Activated CD4-positive, alpha-beta T cell treated with anti-CD3 and anti-CD28 coated beads for 36 hours (primary cell): ENCODE measurements at regions of chr1 and their contacts with region 1.

Region 1: GRCh38 chr1:12407050-12407961 is 177.5 kb downstream of the VPS13D start:
- DNase-seq: peak; percentile 23
- ATAC-seq: peak; percentile 78
- H3K4me3 Mint-ChIP-seq: no peak overlapping the region
- H3K27ac Mint-ChIP-seq: no peak overlapping the region
- H3K4me1 Mint-ChIP-seq: peaks cover 35% of the 10 kb centered on the region
- H3K27me3 Mint-ChIP-seq: no peaks in the 10 kb centered on the region

Region 2: GRCh38 chr1:12229835-12230548 is 177.3 kb before region 1 on chr1 and contains the start of gene VPS13D:
- CTCF ChIA-PET with region 1: no interaction called
- POLR2A ChIA-PET with region 1: no interaction called
- intact Hi-C with region 1: no loop called
- DNase-seq: peak; percentile 93
- ATAC-seq: peak; percentile 92
- H3K4me3 Mint-ChIP-seq: peak within 1 kb of the TSS; percentile 83
- H3K27ac Mint-ChIP-seq: peak within 1 kb of the TSS; percentile 47
- H3K4me1 Mint-ChIP-seq: peaks cover 23% of the 10 kb centered on the region
- H3K27me3 Mint-ChIP-seq: no peaks in the 10 kb centered on the region
- total RNA-seq, gene VPS13D: 20.6 to 22.9 TPM

Region 3: DNA sequence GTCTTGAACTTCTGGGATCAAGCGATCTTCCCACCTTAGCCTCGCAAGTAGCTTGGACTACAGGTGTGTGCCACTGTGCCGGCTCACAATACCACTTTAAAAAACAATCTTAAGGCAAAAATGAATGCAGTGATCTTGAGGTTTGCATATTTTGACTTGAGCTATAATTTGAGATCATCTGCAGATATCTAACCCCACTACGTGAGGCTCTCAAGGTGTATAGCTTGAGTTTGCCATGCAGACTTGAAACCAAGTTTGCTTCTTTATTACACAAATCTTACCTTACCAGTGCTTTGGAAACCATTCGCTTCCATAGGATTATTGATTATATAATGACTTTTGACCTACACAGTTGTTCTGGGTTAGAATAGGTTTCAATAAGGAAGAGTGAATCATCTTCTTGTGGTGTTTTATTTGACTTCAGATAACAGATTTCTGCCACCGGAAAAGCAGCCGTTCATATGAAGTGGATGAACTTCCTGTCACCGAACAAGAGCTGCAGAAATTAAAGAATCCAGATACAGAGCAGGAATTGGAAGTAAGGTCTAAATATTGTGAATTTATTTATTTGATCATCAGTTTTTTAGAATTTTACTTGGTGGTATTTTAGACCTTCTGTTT is 22.4 kb before region 1 on chr1:
- CTCF ChIA-PET with region 1: interaction called, 11 read pairs
- POLR2A ChIA-PET with region 1: no interaction called
- intact Hi-C with region 1: no loop called
- DNase-seq: peak; percentile 35
- ATAC-seq: peak; percentile 75
- H3K4me3 Mint-ChIP-seq: no peak overlapping the region
- H3K27ac Mint-ChIP-seq: no peak overlapping the region
- H3K4me1 Mint-ChIP-seq: peaks cover 42% of the 10 kb centered on the region
- H3K27me3 Mint-ChIP-seq: no peaks in the 10 kb centered on the region

Region 4: GRCh38 chr1:12630946-12631530 is 223.7 kb after region 1 on chr1:
- CTCF ChIA-PET with region 1: no interaction called
- POLR2A ChIA-PET with region 1: no interaction called
- intact Hi-C with region 1: no loop called
- DNase-seq: no peak
- ATAC-seq: no peak
- H3K4me3 Mint-ChIP-seq: no peak overlapping the region
- H3K27ac Mint-ChIP-seq: no peak overlapping the region
- H3K4me1 Mint-ChIP-seq: peaks cover 7% of the 10 kb centered on the region
- H3K27me3 Mint-ChIP-seq: peaks cover 2% of the 10 kb centered on the region